Right cardiac atrium (tissue), 5 donors: ENCODE measurements at regions of chr3 and their contacts with region 1.

Region 1: GRCh38 chr3:70716832-70717231 is 404.4 kb upstream of the MDFIC2 start:
- DNase-seq: peak; percentile 23 to 73 (median 42)
- ATAC-seq: peak; percentile 59 to 64
- H3K4me3 ChIP-seq: no peak overlapping the region
- H3K27ac ChIP-seq: no peak overlapping the region
- H3K4me1 ChIP-seq: no peaks in the 10 kb centered on the region
- H3K27me3 ChIP-seq: no peaks in the 10 kb centered on the region

Region 2: GRCh38 chr3:70982700-70983140 is 265.9 kb after region 1 on chr3:
- intact Hi-C with region 1: loop called in 1 of 4 experiments (anchors 10 kb)
- DNase-seq: peak in 2 of 3 donors; percentile 50 to 65
- ATAC-seq: peak; percentile 78 to 85
- H3K4me3 ChIP-seq: no peak overlapping the region
- H3K27ac ChIP-seq: peak overlapping the region; percentile 94
- H3K4me1 ChIP-seq: peaks cover 20% of the 10 kb centered on the region
- H3K27me3 ChIP-seq: no peaks in the 10 kb centered on the region

Region 3: DNA sequence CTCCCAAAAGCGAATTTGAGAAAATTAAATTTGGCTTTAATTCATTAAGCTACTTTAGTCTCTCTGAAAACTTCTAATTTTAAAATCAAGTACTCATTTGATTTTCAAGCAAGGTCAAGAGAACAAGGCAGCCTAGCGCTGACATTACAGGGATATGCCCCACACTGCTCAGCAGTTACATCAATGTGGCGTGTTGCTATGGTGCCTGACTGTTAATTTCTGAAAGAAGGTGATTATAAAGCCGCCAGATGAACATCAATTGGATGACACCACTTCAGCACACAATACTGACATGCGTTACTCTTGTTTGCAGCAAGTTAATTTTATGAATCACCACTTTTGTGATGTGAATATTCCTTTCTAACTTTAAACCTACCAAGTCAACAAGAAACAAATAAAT is 582.3 kb after region 1 on chr3:
- intact Hi-C with region 1: loop called in 1 of 4 experiments (anchors 10 kb)
- DNase-seq: no peak
- ATAC-seq: no peak
- H3K4me3 ChIP-seq: no peak overlapping the region
- H3K27ac ChIP-seq: no peak overlapping the region
- H3K4me1 ChIP-seq: peaks cover 2% of the 10 kb centered on the region
- H3K27me3 ChIP-seq: no peaks in the 10 kb centered on the region

Region 4: DNA sequence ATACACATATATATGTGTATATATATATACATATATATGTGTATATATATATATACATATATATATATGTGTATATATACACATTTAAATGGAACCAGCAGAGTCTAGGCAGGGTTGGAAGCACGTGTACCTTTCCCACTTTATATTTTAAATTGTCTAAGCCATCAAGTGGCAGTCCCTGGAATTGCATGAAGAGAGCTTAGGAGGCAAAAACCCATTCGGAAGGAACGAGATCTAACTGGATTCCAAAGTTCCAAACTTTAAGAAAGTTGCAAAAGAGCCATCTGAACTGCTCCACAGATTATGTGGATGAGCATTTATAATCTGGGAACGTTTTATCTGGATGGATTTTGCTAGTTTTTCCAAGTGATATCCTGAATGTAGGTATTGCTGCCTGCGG is 680.2 kb after region 1 on chr3:
- intact Hi-C with region 1: loop called in 1 of 4 experiments (anchors 10 kb)
- DNase-seq: no peak
- ATAC-seq: peak in 1 of 2 donors; percentile 44
- H3K4me3 ChIP-seq: no peak overlapping the region
- H3K27ac ChIP-seq: no peak overlapping the region
- H3K4me1 ChIP-seq: no peaks in the 10 kb centered on the region
- H3K27me3 ChIP-seq: no peaks in the 10 kb centered on the region